ENCODE measurements at regions of chr2 and their contacts with region 1.

Region 1: GRCh38 chr2:10860813-10861360 is 48.3 kb upstream of the PDIA6 start:
- DNase-seq: peak in 1 of 2 experiments; percentile 61
- H3K4me3 ChIP-seq: no peak overlapping the region
- H3K27ac ChIP-seq: no peak overlapping the region
- H3K4me1 ChIP-seq: no peaks in the 10 kb centered on the region
- H3K27me3 ChIP-seq: peaks cover 79% of the 10 kb centered on the region
- CTCF ChIP-seq: no peak

Region 2: GRCh38 chr2:10846110-10846861 is 14.6 kb before region 1 on chr2:
- CTCF ChIA-PET with region 1: interaction called, 10 read pairs
- POLR2A ChIA-PET with region 1: no interaction called
- intact Hi-C with region 1: no loop called
- DNase-seq: no peak
- H3K4me3 ChIP-seq: no peak overlapping the region
- H3K27ac ChIP-seq: no peak overlapping the region
- H3K4me1 ChIP-seq: peaks cover 9% of the 10 kb centered on the region; the same call in 1 of the 2 replicates
- H3K27me3 ChIP-seq: no peaks in the 10 kb centered on the region
- CTCF ChIP-seq: no peak